ENCODE measurements at regions of chr11 and their contacts with region 1.

Region 1: DNA sequence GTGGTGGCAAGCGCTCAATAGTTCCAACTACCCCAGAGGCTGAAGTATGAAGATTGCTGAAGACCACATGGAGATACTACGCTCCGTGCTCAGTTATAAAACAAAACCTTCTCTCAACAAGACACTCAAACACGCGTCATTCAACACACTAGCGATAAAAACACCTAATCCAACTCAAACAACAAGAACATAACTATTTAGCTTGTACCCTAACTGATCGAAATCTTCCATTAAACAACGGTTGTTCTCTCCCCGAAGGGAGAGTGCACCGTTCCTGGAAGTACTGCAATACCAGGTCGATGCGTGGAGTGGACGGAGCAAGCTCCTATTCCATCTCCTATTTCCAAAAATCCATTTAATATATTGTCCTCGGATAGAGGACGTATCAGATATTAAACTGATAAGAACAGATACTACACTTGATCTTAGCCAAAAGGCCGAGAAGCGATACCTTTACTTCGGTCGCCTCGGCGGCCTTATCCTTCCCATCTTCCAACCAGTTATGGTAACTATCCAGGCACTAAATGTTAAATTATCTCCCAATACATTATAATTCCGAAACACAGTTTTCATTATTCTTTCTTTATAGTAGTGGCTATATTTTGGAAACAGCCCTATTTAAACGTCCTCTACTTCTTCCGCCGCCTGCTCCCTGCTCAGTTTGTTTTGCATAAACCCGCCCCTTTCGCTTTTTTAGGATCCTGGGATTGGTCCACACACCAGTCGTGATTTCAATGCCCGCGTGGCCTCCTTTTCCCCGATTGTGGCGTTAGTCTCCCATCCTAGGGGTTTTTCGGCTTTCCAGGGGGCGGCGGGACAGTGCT is 2.2 kb upstream of the WDR74 start:
- DNase-seq: peak; percentile 92
- ATAC-seq: peak; percentile 74
- H3K4me3 Mint-ChIP-seq: no peak overlapping the region
- H3K27ac Mint-ChIP-seq: no peak overlapping the region
- H3K4me1 Mint-ChIP-seq: peaks cover 20% of the 10 kb centered on the region
- H3K27me3 Mint-ChIP-seq: no peaks in the 10 kb centered on the region

Region 2: GRCh38 chr11:62573592-62574362 is 267.8 kb before region 1 on chr11 and contains the start of gene EEF1G:
- CTCF ChIA-PET with region 1: no interaction called
- POLR2A ChIA-PET with region 1: interaction called, 14 read pairs
- DNase-seq: peak; percentile 100
- ATAC-seq: peak; percentile 96
- H3K4me3 Mint-ChIP-seq: peak within 1 kb of the TSS; percentile 99
- H3K27ac Mint-ChIP-seq: peak within 1 kb of the TSS; percentile 97
- H3K4me1 Mint-ChIP-seq: peaks cover 53% of the 10 kb centered on the region
- H3K27me3 Mint-ChIP-seq: no peaks in the 10 kb centered on the region
- total RNA-seq, gene EEF1G: 1,058 to 1,098 TPM

Region 3: DNA sequence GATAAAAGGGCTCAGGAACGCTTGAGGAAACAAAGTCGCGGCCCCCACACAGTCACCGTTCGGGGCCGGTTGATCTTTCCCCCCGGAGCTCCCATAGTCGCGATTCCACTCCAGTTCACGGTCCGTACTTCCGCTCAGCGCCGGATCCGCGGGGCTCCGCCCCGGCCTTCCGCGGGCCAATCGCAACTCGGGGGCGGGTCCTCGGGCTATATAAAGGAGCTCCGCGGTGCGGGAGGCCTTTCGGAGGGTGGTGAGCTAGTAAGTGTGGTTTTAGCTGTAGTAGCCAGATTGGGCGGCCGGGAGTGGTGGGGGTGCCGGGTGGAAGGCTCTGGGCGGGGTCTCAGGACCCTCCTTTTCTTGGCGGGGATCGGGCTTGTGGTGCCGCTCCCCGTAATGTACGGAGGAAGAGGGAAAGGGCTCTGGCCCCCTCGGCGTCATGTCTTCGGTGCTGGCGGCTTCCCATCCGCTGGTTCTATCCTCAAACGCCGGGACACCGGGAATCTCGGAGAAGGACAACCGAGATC is 176.4 kb before region 1 on chr11 and contains the starts of genes C11orf98 and CSKMT:
- CTCF ChIA-PET with region 1: no interaction called
- POLR2A ChIA-PET with region 1: interaction called, 36 read pairs
- DNase-seq: peak; percentile 97
- ATAC-seq: peak; percentile 93
- H3K4me3 Mint-ChIP-seq: peak within 1 kb of the TSS; percentile 98
- H3K27ac Mint-ChIP-seq: peak within 1 kb of the TSS; percentile 93
- H3K4me1 Mint-ChIP-seq: peaks cover 38% of the 10 kb centered on the region
- H3K27me3 Mint-ChIP-seq: no peaks in the 10 kb centered on the region
- total RNA-seq, gene C11orf98: 131 to 133 TPM
- total RNA-seq, gene CSKMT: 21.9 to 22.8 TPM

Region 4: DNA sequence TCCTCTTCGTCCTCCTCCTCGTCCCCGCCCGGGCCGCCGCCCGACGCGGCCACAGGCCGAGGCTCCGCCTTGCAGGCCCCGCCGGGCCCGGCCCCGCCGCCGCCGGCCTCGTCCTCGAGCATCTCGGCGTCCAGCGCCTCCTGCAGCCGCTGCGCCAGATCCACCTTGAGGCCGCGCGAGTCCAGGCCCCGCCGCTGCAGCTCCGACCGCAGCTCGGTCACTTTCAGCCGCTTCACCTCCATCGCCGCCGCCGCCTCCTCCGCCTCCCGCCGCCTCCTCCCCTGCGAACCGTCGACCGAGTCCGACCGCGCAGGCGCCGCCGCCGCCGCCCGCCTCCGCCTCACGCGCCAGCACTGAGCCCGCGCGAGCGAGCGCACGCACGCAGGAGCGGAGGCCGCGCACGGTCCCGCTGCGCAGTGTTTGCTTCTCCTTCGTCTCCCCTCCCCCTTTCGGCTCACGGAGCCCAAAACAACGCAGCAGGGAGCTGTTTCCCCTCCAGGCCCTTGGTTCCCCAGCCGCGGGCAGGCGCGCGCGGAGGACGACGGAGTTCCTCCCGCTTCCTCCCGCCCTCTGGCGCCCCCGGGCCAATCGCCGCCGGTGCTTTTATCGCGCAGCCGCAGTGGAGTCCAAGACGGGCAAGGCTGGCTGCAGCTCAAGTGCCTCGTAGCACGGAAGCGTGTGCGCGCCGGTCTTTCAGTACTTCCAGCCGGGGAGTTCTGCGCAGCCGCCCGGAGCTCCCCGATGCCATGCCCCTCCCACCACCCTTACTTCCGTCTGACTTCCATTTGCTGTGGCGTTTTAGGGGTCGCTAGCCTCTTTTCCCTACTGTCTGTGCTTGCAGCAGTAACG is 114.4 kb before region 1 on chr11 and contains the start of gene HNRNPUL2:
- CTCF ChIA-PET with region 1: no interaction called
- POLR2A ChIA-PET with region 1: interaction called, 58 read pairs
- DNase-seq: peak; percentile 99
- ATAC-seq: peak; percentile 87
- H3K4me3 Mint-ChIP-seq: peak within 1 kb of the TSS; percentile 94
- H3K27ac Mint-ChIP-seq: peak within 1 kb of the TSS; percentile 96
- H3K4me1 Mint-ChIP-seq: peaks cover 47% of the 10 kb centered on the region
- H3K27me3 Mint-ChIP-seq: no peaks in the 10 kb centered on the region
- total RNA-seq, gene HNRNPUL2: 65.4 to 67.0 TPM

Region 5: DNA sequence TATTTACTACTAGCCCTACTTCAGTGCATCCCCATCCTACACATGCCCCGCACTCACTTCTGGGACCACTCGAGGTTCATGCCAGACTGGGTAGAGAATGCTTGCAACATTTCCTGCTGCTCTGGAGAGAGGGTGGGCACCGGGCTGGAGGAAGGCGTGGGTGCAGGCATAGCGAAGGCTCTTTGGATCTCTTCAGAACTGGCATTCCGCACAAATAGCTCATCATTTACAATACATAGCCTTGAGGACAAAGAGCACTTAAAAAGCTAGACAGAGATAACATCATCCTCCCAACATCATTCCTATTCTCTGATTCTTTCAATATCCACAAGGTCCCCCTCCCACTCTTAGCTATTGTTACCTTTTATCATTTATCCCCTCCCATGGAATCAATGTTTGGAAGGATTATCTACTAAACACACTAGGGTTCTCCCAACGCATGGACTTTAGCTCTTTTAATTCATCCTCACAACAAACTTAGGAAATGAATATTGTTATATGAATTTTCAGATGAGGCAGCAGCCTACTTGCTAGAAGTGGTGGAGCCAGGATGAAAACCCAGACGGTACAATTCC is 47.3 kb before region 1 on chr11:
- CTCF ChIA-PET with region 1: interaction called, 3 read pairs
- POLR2A ChIA-PET with region 1: interaction called, 190 read pairs
- DNase-seq: no peak
- ATAC-seq: no peak
- H3K4me3 Mint-ChIP-seq: peak overlapping the region; percentile 10
- H3K27ac Mint-ChIP-seq: no peak overlapping the region
- H3K4me1 Mint-ChIP-seq: peaks cover 28% of the 10 kb centered on the region
- H3K27me3 Mint-ChIP-seq: no peaks in the 10 kb centered on the region

Region 6: GRCh38 chr11:62823677-62824076 is 17.9 kb before region 1 on chr11:
- CTCF ChIA-PET with region 1: no interaction called
- POLR2A ChIA-PET with region 1: interaction called, 47 read pairs
- DNase-seq: no peak
- ATAC-seq: no peak
- H3K4me3 Mint-ChIP-seq: no peak overlapping the region
- H3K27ac Mint-ChIP-seq: peak overlapping the region; percentile 32
- H3K4me1 Mint-ChIP-seq: peaks cover 19% of the 10 kb centered on the region
- H3K27me3 Mint-ChIP-seq: no peaks in the 10 kb centered on the region

Region 7: DNA sequence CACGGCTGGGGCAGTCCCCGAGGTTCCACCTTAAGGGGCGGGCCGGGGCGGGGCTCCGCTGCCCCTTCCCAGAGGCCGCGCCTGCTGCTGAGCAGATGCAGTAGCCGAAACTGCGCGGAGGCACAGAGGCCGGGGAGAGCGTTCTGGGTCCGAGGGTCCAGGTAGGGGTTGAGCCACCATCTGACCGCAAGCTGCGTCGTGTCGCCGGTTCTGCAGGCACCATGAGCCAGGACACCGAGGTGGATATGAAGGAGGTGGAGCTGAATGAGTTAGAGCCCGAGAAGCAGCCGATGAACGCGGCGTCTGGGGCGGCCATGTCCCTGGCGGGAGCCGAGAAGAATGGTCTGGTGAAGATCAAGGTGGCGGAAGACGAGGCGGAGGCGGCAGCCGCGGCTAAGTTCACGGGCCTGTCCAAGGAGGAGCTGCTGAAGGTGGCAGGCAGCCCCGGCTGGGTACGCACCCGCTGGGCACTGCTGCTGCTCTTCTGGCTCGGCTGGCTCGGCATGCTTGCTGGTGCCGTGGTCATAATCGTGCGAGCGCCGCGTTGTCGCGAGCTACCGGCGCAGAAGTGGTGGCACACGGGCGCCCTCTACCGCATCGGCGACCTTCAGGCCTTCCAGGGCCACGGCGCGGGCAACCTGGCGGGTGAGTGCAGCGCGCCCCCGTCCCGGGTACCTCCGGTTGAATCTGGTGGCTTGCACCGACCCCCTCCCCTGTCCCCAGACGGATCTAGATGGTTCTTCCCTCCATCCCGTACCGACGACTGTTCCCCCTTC is 39.4 kb after region 1 on chr11 and contains the start of gene SLC3A2:
- CTCF ChIA-PET with region 1: interaction called, 5 read pairs
- POLR2A ChIA-PET with region 1: interaction called, 114 read pairs
- DNase-seq: peak; percentile 92
- ATAC-seq: peak; percentile 87
- H3K4me3 Mint-ChIP-seq: peak within 1 kb of the TSS; percentile 100
- H3K27ac Mint-ChIP-seq: peak within 1 kb of the TSS; percentile 100
- H3K4me1 Mint-ChIP-seq: peaks cover 49% of the 10 kb centered on the region
- H3K27me3 Mint-ChIP-seq: no peaks in the 10 kb centered on the region
- total RNA-seq, gene SLC3A2: 190 to 202 TPM

Measured in activated CD8-positive, alpha-beta T cell treated with anti-CD3 and anti-CD28 coated beads, Interleukin-2, amount 10 ng/mL, durations not matched to agents 7 days and 5 days (primary cell).